H1 (cell line): ENCODE measurements at regions of chr9 and their contacts with region 1.

Region 1: GRCh38 chr9:125241000-125241862 is at the start of gene HSPA5:
- DNase-seq: peak; percentile 99
- H3K4me3 ChIP-seq: peak within 1 kb of the TSS; percentile 75 to 100 (median 93)
- H3K27ac ChIP-seq: peak within 1 kb of the TSS; percentile 91
- H3K4me1 ChIP-seq: peaks cover 0 to 6% (median under 1%) of the 10 kb centered on the region in 4 experiments; a peak in 1 of 7 replicates
- H3K27me3 ChIP-seq: peaks cover 0 to 2% (median 0%) of the 10 kb centered on the region in 4 experiments; a peak in 1 of 7 replicates
- CTCF ChIP-seq: peak in 2 of 3 experiments; percentile 7 to 11; a peak in 2 of 4 replicates
- EP300 ChIP-seq: no peak
- POLR2A ChIP-seq: peak; percentile 99
- RAD21 ChIP-seq: peak in 1 of 2 experiments; percentile 2; a peak in 1 of 4 replicates
- total RNA-seq, gene HSPA5: 352 and 354 TPM in 2 replicates

Region 2: DNA sequence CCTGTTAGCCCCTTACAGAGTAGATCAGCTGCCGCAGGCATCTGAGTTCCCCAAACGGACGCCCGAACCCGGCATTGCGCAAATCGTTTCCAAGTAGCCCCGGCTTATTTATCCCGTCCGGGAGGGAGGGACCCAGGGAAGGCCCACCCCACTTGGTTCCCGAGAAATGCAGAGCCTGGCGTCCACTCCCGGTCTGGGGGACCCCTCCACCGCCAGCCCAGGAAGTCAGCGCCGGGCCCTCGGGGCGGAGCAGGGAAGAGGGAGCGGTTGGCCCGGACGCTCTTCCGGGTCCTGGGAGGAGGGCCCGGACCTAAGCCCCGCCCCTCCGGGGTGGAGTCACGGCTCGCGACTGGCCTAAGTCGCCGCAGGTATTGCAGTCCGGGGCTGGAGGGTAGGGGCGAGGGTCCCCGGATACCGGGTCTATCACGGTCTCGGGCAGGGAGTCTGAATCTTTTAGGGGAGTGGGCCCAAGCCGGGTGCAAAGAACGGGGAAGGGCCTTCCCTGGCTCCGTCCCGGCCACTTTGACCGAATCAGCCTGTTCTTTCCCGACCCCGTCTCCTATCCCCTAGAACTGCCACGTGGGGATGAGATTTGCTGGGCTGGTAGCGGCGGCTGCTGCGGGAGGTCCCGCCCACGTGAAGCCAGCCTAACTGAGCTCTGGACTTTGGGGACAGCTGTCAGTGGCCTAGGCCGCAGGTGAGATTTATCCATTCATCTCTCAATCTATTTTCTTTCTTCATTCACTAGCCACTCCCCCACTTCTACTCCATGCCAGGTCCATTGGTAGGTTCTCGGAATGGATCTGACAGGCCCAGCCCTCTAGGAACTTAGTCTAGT is 40.8 kb before region 1 on chr9 and contains the start of gene RABEPK:
- CTCF ChIA-PET with region 1: interaction called, 3 read pairs
- POLR2A ChIA-PET with region 1: interaction called, 24 read pairs
- DNase-seq: peak; percentile 90 to 98
- H3K4me3 ChIP-seq: peak within 1 kb of the TSS; percentile 59 to 88 (median 80)
- H3K27ac ChIP-seq: no peak within 1 kb of the TSS
- H3K4me1 ChIP-seq: peaks cover 0 to 3% (median 0%) of the 10 kb centered on the region in 4 experiments; a peak in 2 of 7 replicates
- H3K27me3 ChIP-seq: no peaks in the 10 kb centered on the region
- CTCF ChIP-seq: no peak
- EP300 ChIP-seq: no peak
- POLR2A ChIP-seq: peak; percentile 72 to 91
- RAD21 ChIP-seq: no peak
- total RNA-seq, gene RABEPK: 32.6 and 34.3 TPM in 2 replicates

Region 3: GRCh38 chr9:125255781-125256391 is 14.7 kb after region 1 on chr9:
- CTCF ChIA-PET with region 1: interaction called, 14 read pairs
- POLR2A ChIA-PET with region 1: interaction called, 19 read pairs
- DNase-seq: no peak
- H3K4me3 ChIP-seq: no peak overlapping the region
- H3K27ac ChIP-seq: no peak overlapping the region
- H3K4me1 ChIP-seq: no peaks in the 10 kb centered on the region
- H3K27me3 ChIP-seq: no peaks in the 10 kb centered on the region
- CTCF ChIP-seq: peak; percentile 42 to 60 (median 50)
- EP300 ChIP-seq: no peak
- POLR2A ChIP-seq: no peak
- RAD21 ChIP-seq: peak; percentile 83 to 85

Region 4: GRCh38 chr9:125261501-125262293 is 20.5 kb after region 1 on chr9 and contains the start of gene GAPVD1:
- CTCF ChIA-PET with region 1: interaction called, 8 read pairs
- POLR2A ChIA-PET with region 1: interaction called, 19 read pairs
- DNase-seq: peak; percentile 82 to 94
- H3K4me3 ChIP-seq: peak within 1 kb of the TSS; percentile 80 to 95 (median 89)
- H3K27ac ChIP-seq: no peak within 1 kb of the TSS
- H3K4me1 ChIP-seq: peaks cover 0 to 2% (median 0%) of the 10 kb centered on the region in 4 experiments; a peak in 1 of 7 replicates
- H3K27me3 ChIP-seq: no peaks in the 10 kb centered on the region
- CTCF ChIP-seq: peak; percentile 46 to 57 (median 54)
- EP300 ChIP-seq: no peak
- POLR2A ChIP-seq: peak in 1 of 2 experiments; percentile 62; a peak in 1 of 3 replicates
- RAD21 ChIP-seq: no peak
- total RNA-seq, gene GAPVD1: 36.3 and 40.5 TPM in 2 replicates

Region 5: DNA sequence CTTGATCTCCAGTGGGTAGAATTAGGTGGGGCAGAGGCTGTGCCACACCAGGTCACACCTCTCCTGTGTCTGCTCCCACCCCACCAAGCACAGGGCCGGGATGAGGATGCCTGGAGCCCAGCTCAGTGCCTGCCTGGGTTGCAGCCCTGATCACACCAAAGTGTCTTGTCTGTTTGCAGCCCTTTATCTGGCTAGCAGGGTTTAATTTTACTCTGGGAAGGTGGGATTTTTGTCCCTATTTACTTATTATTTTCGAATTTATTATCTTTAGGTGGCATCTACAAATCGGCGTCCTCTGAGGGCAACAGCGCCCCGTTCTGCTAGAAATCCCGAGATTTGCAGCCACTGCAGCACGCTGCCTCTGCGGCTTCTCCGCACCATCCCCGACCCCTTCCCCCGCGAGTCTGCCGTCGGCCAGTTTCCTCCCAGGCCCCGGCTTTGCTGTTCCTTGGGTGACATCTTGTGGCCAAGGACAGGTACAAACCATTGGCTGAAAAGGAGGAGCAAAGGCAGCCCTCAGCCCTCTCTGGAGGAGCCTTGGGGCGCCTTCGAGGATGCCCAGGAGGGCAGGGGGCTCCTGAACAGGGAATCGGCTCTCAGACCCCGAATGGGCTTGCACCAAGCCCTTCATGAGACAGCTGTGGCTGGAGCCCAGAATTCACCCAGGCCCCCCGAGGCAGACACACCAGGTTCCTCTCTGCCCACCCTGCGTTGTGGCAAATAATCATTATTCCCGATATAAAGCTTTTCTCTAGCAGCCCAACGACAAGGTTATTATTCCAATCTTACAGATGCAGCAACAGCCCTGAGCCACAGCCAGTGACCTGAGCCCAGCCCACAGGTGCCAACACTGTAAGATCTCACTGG is 133.4 kb after region 1 on chr9:
- CTCF ChIA-PET with region 1: interaction called, 5 read pairs
- POLR2A ChIA-PET with region 1: interaction called, 13 read pairs
- DNase-seq: peak; percentile 68 to 81
- H3K4me3 ChIP-seq: peak overlapping the region in 2 of 4 experiments; percentile 10 to 35; a peak in 3 of 8 replicates
- H3K27ac ChIP-seq: no peak overlapping the region
- H3K4me1 ChIP-seq: peaks cover 0 to 11% (median 4%) of the 10 kb centered on the region in 4 experiments; a peak in 4 of 7 replicates
- H3K27me3 ChIP-seq: no peaks in the 10 kb centered on the region; a peak in 1 of 7 replicates
- CTCF ChIP-seq: peak; percentile 69 to 93 (median 89)
- EP300 ChIP-seq: no peak
- POLR2A ChIP-seq: no peak
- RAD21 ChIP-seq: peak; percentile 100